WTC11 (cell line): ENCODE measurements at regions of chr6 and their contacts with region 1.

Region 1: DNA sequence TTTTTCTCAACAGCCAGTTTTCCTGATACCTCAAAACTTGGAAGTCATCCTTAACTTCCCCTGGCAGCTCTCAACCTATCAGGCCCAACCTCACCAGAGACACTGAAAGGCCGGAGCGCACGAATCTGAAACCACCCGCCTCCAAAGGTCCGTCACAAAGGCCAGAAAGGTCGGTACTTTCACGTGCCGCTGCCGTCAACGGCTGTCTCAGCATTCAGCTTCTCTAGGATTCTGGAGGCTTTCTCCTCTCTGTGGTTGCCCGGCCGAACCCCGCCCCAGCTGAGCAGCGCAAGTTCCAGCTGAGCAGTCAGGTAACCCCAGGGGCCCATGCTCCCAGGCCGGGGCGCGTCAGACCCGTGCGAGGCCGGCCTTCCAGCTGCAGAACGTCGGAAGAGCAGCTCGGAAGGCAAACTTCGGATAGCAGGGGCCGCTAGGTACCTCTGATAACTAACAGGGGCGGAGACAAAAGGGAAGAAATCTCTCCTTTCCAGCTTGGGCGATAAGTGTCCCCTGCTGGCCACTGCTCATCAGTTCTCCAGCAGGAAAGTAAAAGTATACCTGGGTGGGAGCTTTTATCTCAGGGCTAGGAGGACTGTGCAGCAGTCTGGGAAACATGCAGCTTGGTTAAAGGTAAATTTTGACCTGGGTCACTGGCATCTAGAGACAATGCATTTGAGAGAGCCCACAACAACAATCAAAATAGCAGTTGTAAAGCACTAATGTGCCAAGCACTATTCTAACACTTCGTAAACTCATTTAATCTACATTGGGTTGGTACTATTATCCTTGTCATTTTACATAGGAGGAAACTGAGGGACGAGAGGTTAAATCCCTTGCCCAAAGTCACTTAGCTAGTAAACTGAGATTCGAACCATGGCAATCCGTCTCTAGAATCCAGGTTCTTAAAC is 16.1 kb downstream of the ZSCAN12 start:
- DNase-seq: peak; percentile 94
- ATAC-seq: peak; percentile 93
- H3K4me3 Mint-ChIP-seq: peak overlapping the region; percentile 76
- H3K27ac Mint-ChIP-seq: peak overlapping the region; percentile 98
- H3K4me1 Mint-ChIP-seq: peaks cover 26% of the 10 kb centered on the region
- H3K27me3 Mint-ChIP-seq: no peaks in the 10 kb centered on the region
- CTCF ChIP-seq: peak; percentile 12; the same call in 1 of the 2 replicates

Region 2: DNA sequence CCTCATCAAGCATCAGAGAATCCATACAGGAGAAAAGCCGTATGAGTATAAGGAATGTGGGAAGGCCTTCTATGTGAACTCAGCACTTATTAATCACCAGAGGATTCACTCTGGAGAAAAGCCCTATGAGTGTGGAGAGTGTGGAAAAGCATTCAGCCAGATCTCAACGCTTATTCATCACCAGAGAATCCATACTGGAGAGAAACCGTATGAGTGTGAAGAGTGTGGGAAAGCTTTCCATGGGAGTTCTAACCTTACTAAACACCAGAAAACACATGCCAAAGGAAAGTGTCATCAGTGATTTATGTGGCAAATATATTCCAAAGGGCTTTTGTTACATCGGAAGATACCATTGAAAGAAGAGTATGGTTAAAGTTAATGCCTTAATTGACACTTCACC is 216.4 kb before region 1 on chr6:
- CTCF ChIA-PET with region 1: no interaction called
- POLR2A ChIA-PET with region 1: no interaction called
- DNase-seq: no peak
- ATAC-seq: no peak
- H3K4me3 Mint-ChIP-seq: no peak overlapping the region
- H3K27ac Mint-ChIP-seq: no peak overlapping the region
- H3K4me1 Mint-ChIP-seq: peaks cover 3% of the 10 kb centered on the region; the same call in 1 of the 2 replicates
- H3K27me3 Mint-ChIP-seq: peaks cover 89% of the 10 kb centered on the region
- CTCF ChIP-seq: no peak

Region 3: GRCh38 chr6:28322661-28323060 is 60.8 kb before region 1 on chr6:
- CTCF ChIA-PET with region 1: no interaction called
- POLR2A ChIA-PET with region 1: no interaction called
- DNase-seq: no peak
- ATAC-seq: no peak
- H3K4me3 Mint-ChIP-seq: no peak overlapping the region
- H3K27ac Mint-ChIP-seq: no peak overlapping the region
- H3K4me1 Mint-ChIP-seq: no peaks in the 10 kb centered on the region
- H3K27me3 Mint-ChIP-seq: peaks cover 3% of the 10 kb centered on the region; the same call in 1 of the 2 replicates
- CTCF ChIP-seq: no peak

Region 4: GRCh38 chr6:28399350-28400121 is 16.0 kb after region 1 on chr6 and contains the start of gene ZSCAN12:
- CTCF ChIA-PET with region 1: interaction called, 15 read pairs
- POLR2A ChIA-PET with region 1: interaction called, 8 read pairs
- DNase-seq: peak; percentile 81
- ATAC-seq: peak; percentile 76
- H3K4me3 Mint-ChIP-seq: peak within 1 kb of the TSS; percentile 90
- H3K27ac Mint-ChIP-seq: peak within 1 kb of the TSS; percentile 90
- H3K4me1 Mint-ChIP-seq: peaks cover 23% of the 10 kb centered on the region
- H3K27me3 Mint-ChIP-seq: peaks cover 41% of the 10 kb centered on the region
- CTCF ChIP-seq: no peak
- total RNA-seq, gene ZSCAN12: 7.8 to 8.5 TPM (median 8.3 TPM) in 3 replicates

Region 5: GRCh38 chr6:28425944-28426541 is 42.6 kb after region 1 on chr6:
- CTCF ChIA-PET with region 1: no interaction called
- POLR2A ChIA-PET with region 1: no interaction called
- DNase-seq: no peak
- ATAC-seq: no peak
- H3K4me3 Mint-ChIP-seq: no peak overlapping the region
- H3K27ac Mint-ChIP-seq: no peak overlapping the region
- H3K4me1 Mint-ChIP-seq: no peaks in the 10 kb centered on the region
- H3K27me3 Mint-ChIP-seq: no peaks in the 10 kb centered on the region
- CTCF ChIP-seq: no peak

Region 6: GRCh38 chr6:28436404-28436803 is 52.9 kb after region 1 on chr6:
- CTCF ChIA-PET with region 1: no interaction called
- POLR2A ChIA-PET with region 1: no interaction called
- DNase-seq: no peak
- ATAC-seq: no peak
- H3K4me3 Mint-ChIP-seq: no peak overlapping the region
- H3K27ac Mint-ChIP-seq: no peak overlapping the region
- H3K4me1 Mint-ChIP-seq: no peaks in the 10 kb centered on the region
- H3K27me3 Mint-ChIP-seq: no peaks in the 10 kb centered on the region
- CTCF ChIP-seq: no peak